ENCODE measurements at regions of chr2 and their contacts with region 1.

Region 1: GRCh38 chr2:143223556-143223955 is 94.3 kb downstream of the ARHGAP15 start:
- DNase-seq: no peak
- ATAC-seq: no peak
- H3K4me3 ChIP-seq: no peak overlapping the region
- H3K4me3 Mint-ChIP-seq: no peak overlapping the region
- H3K27ac ChIP-seq: no peak overlapping the region
- H3K27ac Mint-ChIP-seq: peak overlapping the region; percentile 67
- H3K4me1 ChIP-seq: peaks cover 7% of the 10 kb centered on the region
- H3K4me1 Mint-ChIP-seq: peaks cover 69% of the 10 kb centered on the region
- H3K27me3 ChIP-seq: no peaks in the 10 kb centered on the region
- H3K27me3 Mint-ChIP-seq: no peaks in the 10 kb centered on the region
- CTCF ChIP-seq: no peak

Region 2: DNA sequence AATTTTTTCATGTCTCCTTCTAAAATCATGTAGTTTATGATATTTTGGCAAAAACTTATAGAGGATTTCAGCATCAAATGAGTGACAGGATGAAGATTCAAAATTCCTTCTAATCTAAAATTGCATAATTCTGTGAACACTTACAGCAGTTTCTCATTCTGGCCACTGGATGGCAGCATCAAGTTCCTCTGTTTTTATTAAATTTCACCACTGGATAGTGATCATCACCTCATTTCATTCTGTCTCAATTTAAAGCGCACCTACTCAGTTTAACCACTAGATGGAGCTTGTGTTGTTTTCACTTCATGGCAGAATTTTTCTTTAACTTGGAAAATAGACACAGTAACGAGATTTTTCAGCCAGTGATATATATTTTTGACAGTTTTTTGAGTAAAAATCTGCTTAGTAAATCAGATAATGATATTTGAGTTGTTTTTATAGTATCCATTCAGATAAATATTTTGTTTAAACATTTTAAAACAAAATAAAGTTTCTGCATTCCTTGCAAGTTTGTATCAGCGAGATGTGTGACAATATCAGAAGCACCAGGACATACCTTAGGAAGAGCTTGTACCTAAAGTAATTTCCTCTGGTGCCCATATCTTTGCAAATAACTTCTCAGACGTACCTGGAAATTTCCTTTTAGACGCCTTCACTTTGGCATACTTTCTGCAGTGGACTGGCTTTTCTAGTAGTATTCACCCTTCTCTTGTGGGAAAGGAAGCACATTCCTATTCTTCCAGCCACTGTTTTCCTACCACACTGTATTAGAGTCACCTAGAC is 189.1 kb before region 1 on chr2:
- CTCF ChIA-PET with region 1: interaction called, 6 read pairs
- POLR2A ChIA-PET with region 1: no interaction called
- intact Hi-C with region 1: loop called (anchors 2 to 5 kb)
- DNase-seq: peak; percentile 20 to 88 (median 38)
- ATAC-seq: peak; percentile 100
- H3K4me3 ChIP-seq: no peak overlapping the region
- H3K4me3 Mint-ChIP-seq: no peak overlapping the region
- H3K27ac ChIP-seq: no peak overlapping the region
- H3K27ac Mint-ChIP-seq: no peak overlapping the region
- H3K4me1 ChIP-seq: no peaks in the 10 kb centered on the region
- H3K4me1 Mint-ChIP-seq: no peaks in the 10 kb centered on the region
- H3K27me3 ChIP-seq: no peaks in the 10 kb centered on the region
- H3K27me3 Mint-ChIP-seq: peaks cover 3% of the 10 kb centered on the region
- CTCF ChIP-seq: peak; percentile 98

Measured in CD4-positive, alpha-beta T cell (primary cell).